Lower leg skin (tissue), 4 donors: ENCODE measurements at regions of chr12 and their contacts with region 1.

Region 1: DNA sequence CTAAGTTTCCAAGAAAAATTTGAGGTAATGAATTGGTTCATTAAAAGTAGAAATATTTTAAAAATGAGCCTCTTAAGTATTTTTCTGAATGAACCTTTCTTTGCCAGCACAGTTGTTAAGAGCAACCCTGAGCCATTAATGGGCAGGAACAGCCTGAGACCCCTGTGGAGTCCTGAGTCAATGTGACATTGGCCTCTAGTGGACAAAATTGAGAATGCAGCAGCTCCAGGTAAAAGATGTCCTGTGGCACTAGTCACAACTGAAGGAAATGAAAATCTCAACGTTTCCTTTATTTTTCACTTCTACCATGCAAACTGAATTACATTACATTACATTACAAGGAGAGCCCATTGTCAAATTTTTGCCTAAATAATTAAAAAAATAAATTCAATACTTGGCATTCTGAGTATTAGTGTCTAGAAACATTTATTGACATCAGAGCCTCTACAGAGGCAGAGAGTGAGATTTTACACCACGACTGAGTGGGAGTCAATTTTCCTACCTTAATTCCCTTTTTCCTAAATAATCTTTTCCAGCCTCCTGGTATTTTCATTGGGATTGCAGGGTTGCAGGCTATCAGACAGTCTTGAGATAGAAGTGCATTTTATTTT is 135.7 kb downstream of the PPM1H start:
- DNase-seq: peak in 1 of 2 donors; percentile 56
- H3K4me3 ChIP-seq: no peak overlapping the region
- CTCF ChIP-seq: peak in 1 of 3 donors; percentile 92
- POLR2A ChIP-seq: no peak

Region 2: GRCh38 chr12:62581288-62582064 is 217.8 kb before region 1 on chr12:
- intact Hi-C with region 1: loop called (anchors 5 kb)
- DNase-seq: no peak
- H3K4me3 ChIP-seq: no peak overlapping the region
- CTCF ChIP-seq: peak in 1 of 3 donors; percentile 43
- POLR2A ChIP-seq: no peak

Region 3: GRCh38 chr12:62971769-62972525 is 172.7 kb after region 1 on chr12:
- intact Hi-C with region 1: no loop called
- DNase-seq: no peak
- H3K4me3 ChIP-seq: no peak overlapping the region
- CTCF ChIP-seq: no peak
- POLR2A ChIP-seq: no peak